ENCODE measurements at regions of chr11 and their contacts with region 1.

Region 1: GRCh38 chr11:6682936-6683861 is at the start of gene MRPL17:
- DNase-seq: peak; percentile 96 to 100 (median 98)
- ATAC-seq: peak; percentile 95 to 99 (median 96)
- H3K4me3 ChIP-seq: peak within 1 kb of the TSS; percentile 88 to 92
- H3K4me3 Mint-ChIP-seq: peak within 1 kb of the TSS; percentile 96 to 100 (median 98)
- H3K27ac ChIP-seq: peak within 1 kb of the TSS; percentile 92
- H3K27ac Mint-ChIP-seq: peak within 1 kb of the TSS; percentile 99 to 100
- H3K4me1 ChIP-seq: peaks cover 16 to 18% of the 10 kb centered on the region in 2 experiments
- H3K4me1 Mint-ChIP-seq: peaks cover 29 to 45% (median 32%) of the 10 kb centered on the region in 3 donors
- H3K27me3 ChIP-seq: no peaks in the 10 kb centered on the region
- H3K27me3 Mint-ChIP-seq: no peaks in the 10 kb centered on the region
- total RNA-seq, gene MRPL17: 12.1 to 33.1 (median 30.2) TPM

Region 2: DNA sequence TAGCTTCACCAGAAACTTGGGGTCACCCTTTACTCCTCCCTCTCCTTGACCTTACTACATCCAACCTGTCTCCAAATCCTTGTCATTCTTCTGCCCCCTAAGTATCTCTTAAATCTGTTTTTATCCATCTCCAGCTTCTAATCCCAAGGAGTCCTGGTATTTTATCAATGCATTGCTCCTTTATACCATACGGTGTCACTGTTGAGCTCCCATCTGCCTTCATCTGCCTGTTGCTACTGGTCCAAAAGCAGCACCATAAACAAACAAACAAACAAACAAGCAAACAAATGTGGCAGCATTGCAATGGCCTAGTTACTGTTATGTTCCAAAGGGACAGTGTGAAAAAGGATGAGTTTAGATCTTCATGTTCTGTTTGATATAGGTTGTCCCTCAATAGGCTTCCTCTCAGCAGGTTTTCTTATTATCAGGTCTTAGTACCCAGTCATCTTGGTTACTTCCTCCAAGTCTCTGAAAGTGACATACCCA is 151.9 kb before region 1 on chr11:
- CTCF ChIA-PET with region 1: interaction called, 3 to 29 read pairs
- POLR2A ChIA-PET with region 1: no interaction called
- DNase-seq: peak in 7 of 35 experiments; percentile 3 to 69 (median 12)
- ATAC-seq: peak in 3 of 4 experiments; percentile 47 to 59 (median 57)
- H3K4me3 ChIP-seq: no peak overlapping the region
- H3K4me3 Mint-ChIP-seq: no peak overlapping the region
- H3K27ac ChIP-seq: no peak overlapping the region
- H3K27ac Mint-ChIP-seq: no peak overlapping the region
- H3K4me1 ChIP-seq: peaks cover 1 to 3% of the 10 kb centered on the region in 2 experiments
- H3K4me1 Mint-ChIP-seq: peaks cover 7 to 13% (median 12%) of the 10 kb centered on the region in 3 donors
- H3K27me3 ChIP-seq: no peaks in the 10 kb centered on the region
- H3K27me3 Mint-ChIP-seq: no peaks in the 10 kb centered on the region

Region 3: DNA sequence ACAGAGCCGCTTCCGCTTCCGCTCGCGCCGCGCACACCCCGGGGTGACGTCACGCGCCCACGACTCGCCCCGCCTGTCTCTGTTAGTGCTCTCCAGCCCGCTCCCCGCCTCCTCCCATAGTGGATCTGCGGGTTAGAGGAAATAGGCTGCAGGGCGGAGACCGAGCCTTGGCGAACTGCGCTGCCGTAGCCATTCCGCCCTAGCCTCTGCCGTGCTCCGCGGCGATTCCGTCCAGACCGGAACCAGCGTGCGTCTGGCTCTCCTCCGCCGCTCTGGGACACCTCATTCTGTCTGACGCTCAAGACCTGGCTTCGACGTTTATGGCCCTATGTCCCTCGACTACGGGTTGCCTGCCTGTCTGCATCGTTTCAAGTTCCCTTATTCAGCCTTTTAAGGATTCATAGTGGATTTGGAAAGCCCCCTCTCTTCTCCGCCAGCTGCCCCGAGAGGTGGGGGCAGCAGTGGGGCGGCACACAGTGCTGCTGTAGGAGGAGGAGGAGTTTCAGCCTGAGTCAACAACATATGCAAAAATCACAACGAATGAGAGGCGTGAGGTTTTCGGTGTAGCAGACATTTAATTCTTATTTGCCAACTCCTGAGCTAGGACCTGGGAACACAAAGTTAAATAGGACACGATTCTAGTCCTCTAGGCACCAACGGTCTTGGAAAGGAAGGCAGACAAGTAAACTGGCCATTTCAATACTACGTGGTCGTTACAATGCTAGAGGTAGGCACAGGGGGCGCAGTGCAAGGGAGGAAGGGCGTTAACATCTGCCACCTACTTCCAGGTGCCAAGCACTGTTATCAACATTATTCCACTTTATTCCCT is 70.8 kb before region 1 on chr11 and contains the start of gene TAF10:
- CTCF ChIA-PET with region 1: interaction called in 1 of 2 experiments, 37 read pairs
- POLR2A ChIA-PET with region 1: interaction called, 3 to 13 read pairs
- DNase-seq: peak; percentile 91 to 98 (median 95)
- ATAC-seq: peak; percentile 89 to 92 (median 90)
- H3K4me3 ChIP-seq: peak within 1 kb of the TSS; percentile 78 to 87
- H3K4me3 Mint-ChIP-seq: peak within 1 kb of the TSS in 2 of 3 donors; percentile 86 to 87
- H3K27ac ChIP-seq: peak within 1 kb of the TSS; percentile 98
- H3K27ac Mint-ChIP-seq: peak within 1 kb of the TSS; percentile 88 to 89
- H3K4me1 ChIP-seq: peaks cover 20 to 59% of the 10 kb centered on the region in 2 experiments
- H3K4me1 Mint-ChIP-seq: peaks cover 32 to 54% (median 33%) of the 10 kb centered on the region in 3 donors
- H3K27me3 ChIP-seq: no peaks in the 10 kb centered on the region
- H3K27me3 Mint-ChIP-seq: no peaks in the 10 kb centered on the region
- total RNA-seq, gene TAF10: 99.4 to 152 (median 144) TPM

Region 4: GRCh38 chr11:6667733-6668374 is 15.3 kb before region 1 on chr11:
- CTCF ChIA-PET with region 1: interaction called, 3 to 16 read pairs
- POLR2A ChIA-PET with region 1: interaction called in 1 of 2 experiments, 5 read pairs
- DNase-seq: peak in 11 of 35 experiments; percentile 12 to 72 (median 26)
- ATAC-seq: peak; percentile 60 to 84 (median 68)
- H3K4me3 ChIP-seq: no peak overlapping the region
- H3K4me3 Mint-ChIP-seq: no peak overlapping the region
- H3K27ac ChIP-seq: peak overlapping the region; percentile 46
- H3K27ac Mint-ChIP-seq: peak overlapping the region; percentile 74 to 81
- H3K4me1 ChIP-seq: peaks cover 22 to 24% of the 10 kb centered on the region in 2 experiments
- H3K4me1 Mint-ChIP-seq: peaks cover 62 to 75% (median 64%) of the 10 kb centered on the region in 3 donors
- H3K27me3 ChIP-seq: no peaks in the 10 kb centered on the region
- H3K27me3 Mint-ChIP-seq: no peaks in the 10 kb centered on the region

Region 5: DNA sequence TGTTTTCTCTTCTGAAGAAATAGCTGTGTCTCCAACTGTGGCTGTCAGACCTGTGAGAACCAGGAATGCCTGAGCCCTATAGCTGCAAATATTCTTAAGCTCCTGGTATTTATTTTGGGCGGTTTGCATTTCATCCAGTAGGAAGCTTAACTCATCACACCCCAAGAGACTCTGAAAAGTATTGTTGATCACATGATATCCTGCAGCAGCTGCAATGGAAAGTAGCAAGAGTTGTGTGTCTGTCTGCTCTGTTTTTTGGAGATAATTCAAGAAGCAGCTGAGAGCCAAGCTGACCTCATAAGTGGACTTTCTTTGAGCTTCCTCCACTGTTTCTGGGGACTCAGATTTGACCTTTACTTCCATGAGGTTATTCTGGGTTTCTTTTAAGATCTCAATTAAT is 36.4 kb after region 1 on chr11:
- CTCF ChIA-PET with region 1: no interaction called
- POLR2A ChIA-PET with region 1: no interaction called
- DNase-seq: no peak
- ATAC-seq: no peak
- H3K4me3 ChIP-seq: no peak overlapping the region
- H3K4me3 Mint-ChIP-seq: peak overlapping the region in 1 of 3 donors; percentile 19
- H3K27ac ChIP-seq: no peak overlapping the region
- H3K27ac Mint-ChIP-seq: peak overlapping the region; percentile 73 to 81
- H3K4me1 ChIP-seq: peaks cover 9 to 47% of the 10 kb centered on the region in 2 experiments
- H3K4me1 Mint-ChIP-seq: peaks cover 59 to 92% (median 86%) of the 10 kb centered on the region in 3 donors
- H3K27me3 ChIP-seq: no peaks in the 10 kb centered on the region
- H3K27me3 Mint-ChIP-seq: no peaks in the 10 kb centered on the region

Region 6: DNA sequence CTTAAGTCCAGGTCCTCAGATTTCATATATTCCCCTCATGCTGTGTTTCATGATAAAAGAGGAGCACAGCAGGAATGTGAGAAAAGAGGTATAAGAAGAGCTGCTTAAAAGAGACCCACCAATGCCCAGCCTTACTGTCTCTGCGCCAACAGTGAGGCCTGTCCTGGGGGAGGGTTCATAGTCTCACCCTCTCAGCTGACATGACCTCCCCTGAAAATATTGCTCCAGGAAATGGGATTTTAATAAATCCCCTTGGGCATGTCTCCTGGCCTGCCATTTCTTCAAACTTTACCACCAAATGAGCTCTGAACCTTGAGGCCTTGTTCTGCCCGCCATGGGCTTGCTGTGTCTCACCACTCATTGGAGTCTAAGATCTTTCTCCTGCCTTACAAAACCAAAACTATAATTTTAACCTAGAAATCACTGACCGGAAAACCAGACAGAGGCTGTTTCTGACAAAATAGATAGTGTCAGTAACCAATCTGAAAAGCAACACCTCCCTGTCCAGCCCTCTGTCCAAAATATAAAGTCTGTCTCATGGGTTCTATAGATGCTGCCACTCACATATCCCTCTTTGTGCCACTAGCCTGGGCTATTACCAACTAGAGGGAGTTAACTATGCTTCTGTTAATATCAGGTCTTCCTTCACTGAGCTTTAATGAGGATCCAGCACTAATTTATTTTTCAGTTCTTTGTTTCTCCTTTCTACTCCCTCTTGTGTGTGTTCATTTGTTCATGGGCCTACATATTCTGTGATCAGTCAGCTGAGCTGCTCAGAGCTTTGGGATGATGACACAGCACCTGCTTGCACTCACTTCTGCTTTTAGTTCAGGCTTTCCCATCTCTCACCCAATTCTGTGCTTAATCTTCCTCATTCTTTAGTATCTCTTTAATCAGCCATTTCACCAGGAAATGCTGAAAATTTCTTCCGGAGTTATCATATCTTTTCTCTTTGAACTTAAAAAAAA is 89.0 kb after region 1 on chr11 and contains the start of gene OR2AG2:
- CTCF ChIA-PET with region 1: no interaction called
- POLR2A ChIA-PET with region 1: no interaction called
- DNase-seq: no peak
- ATAC-seq: no peak
- H3K4me3 ChIP-seq: no peak within 1 kb of the TSS
- H3K4me3 Mint-ChIP-seq: no peak within 1 kb of the TSS
- H3K27ac ChIP-seq: no peak within 1 kb of the TSS
- H3K27ac Mint-ChIP-seq: no peak within 1 kb of the TSS
- H3K4me1 ChIP-seq: no peaks in the 10 kb centered on the region
- H3K4me1 Mint-ChIP-seq: peaks cover 3 to 7% (median 4%) of the 10 kb centered on the region in 3 donors
- H3K27me3 ChIP-seq: no peaks in the 10 kb centered on the region
- H3K27me3 Mint-ChIP-seq: peaks cover 2 to 3% of the 10 kb centered on the region in 2 donors
- total RNA-seq, gene OR2AG2: not detected

Measured in T-cell (primary cell).